ENCODE measurements at regions of chr16 and their contacts with region 1.

Region 1: DNA sequence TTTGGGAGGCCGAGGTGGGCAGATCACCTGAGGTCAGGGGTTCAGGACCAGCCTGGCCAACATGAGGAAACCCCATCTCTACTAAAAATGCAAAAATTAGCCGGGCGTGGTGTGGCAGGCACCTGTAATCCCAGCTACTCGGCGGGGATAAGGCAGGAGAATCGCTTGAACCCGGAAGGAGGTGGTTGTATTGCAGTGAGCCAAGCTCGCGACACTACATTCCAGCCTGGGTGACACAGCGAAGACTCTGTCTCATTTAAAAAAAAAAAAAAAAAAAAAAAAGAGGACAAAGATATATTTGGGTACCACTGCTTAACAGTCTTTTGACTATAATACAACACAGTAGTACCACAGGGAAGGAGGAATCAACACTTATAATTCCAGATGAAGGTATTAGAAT is 9.2 kb downstream of the CNOT1 start:
- DNase-seq: no peak
- ATAC-seq: no peak
- H3K4me3 ChIP-seq: no peak overlapping the region
- H3K4me3 Mint-ChIP-seq: no peak overlapping the region
- H3K27ac ChIP-seq: no peak overlapping the region
- H3K27ac Mint-ChIP-seq: peak overlapping the region; percentile 39
- H3K4me1 ChIP-seq: peaks cover 36% of the 10 kb centered on the region
- H3K4me1 Mint-ChIP-seq: peaks cover 24% of the 10 kb centered on the region
- H3K27me3 ChIP-seq: no peaks in the 10 kb centered on the region
- H3K27me3 Mint-ChIP-seq: no peaks in the 10 kb centered on the region
- CTCF ChIP-seq: no peak

Region 2: GRCh38 chr16:58533751-58534470 is 86.5 kb before region 1 on chr16:
- CTCF ChIA-PET with region 1: no interaction called
- POLR2A ChIA-PET with region 1: no interaction called
- intact Hi-C with region 1: loop called in 1 of 2 experiments (anchors 5 kb)
- DNase-seq: no peak
- ATAC-seq: no peak
- H3K4me3 ChIP-seq: no peak overlapping the region
- H3K4me3 Mint-ChIP-seq: no peak overlapping the region
- H3K27ac ChIP-seq: no peak overlapping the region
- H3K27ac Mint-ChIP-seq: no peak overlapping the region
- H3K4me1 ChIP-seq: no peaks in the 10 kb centered on the region
- H3K4me1 Mint-ChIP-seq: no peaks in the 10 kb centered on the region
- H3K27me3 ChIP-seq: no peaks in the 10 kb centered on the region
- H3K27me3 Mint-ChIP-seq: no peaks in the 10 kb centered on the region
- CTCF ChIP-seq: no peak

Region 3: GRCh38 chr16:58578642-58579041 is 41.8 kb before region 1 on chr16:
- CTCF ChIA-PET with region 1: no interaction called
- POLR2A ChIA-PET with region 1: no interaction called
- intact Hi-C with region 1: no loop called
- DNase-seq: no peak
- ATAC-seq: no peak
- H3K4me3 ChIP-seq: no peak overlapping the region
- H3K4me3 Mint-ChIP-seq: no peak overlapping the region
- H3K27ac ChIP-seq: no peak overlapping the region
- H3K27ac Mint-ChIP-seq: no peak overlapping the region
- H3K4me1 ChIP-seq: no peaks in the 10 kb centered on the region
- H3K4me1 Mint-ChIP-seq: no peaks in the 10 kb centered on the region
- H3K27me3 ChIP-seq: no peaks in the 10 kb centered on the region
- H3K27me3 Mint-ChIP-seq: no peaks in the 10 kb centered on the region
- CTCF ChIP-seq: no peak

Region 4: DNA sequence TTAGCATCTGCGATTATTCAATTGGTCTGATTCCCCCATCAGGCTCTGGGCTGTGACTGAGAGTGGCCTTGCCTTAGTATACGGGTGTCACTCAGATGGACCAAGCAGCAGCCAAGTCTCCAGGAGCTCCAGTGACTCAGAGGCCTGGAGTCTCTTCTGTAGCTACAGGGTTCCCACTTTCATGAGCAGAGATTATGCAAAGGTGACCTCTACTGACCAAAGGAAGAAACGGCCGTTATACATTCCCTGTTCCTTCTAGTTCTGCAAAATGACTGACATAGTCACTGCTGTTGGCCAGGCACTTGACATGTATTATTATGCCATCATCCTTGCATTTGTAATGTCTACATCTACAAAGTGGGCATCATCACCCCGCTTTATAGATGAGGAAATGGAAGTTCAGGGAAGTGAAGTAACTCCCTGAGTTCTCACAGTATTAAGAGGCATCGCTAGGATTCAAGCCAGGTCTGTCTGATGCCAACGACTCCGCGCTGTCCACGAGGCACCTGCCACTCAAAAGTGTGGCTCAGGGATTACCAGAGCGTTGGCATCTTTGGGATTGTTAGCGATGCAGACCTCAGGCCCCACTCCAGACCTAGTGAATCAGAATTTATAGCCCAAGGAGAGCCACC is 40.9 kb after region 1 on chr16:
- CTCF ChIA-PET with region 1: no interaction called
- POLR2A ChIA-PET with region 1: no interaction called
- intact Hi-C with region 1: no loop called
- DNase-seq: peak in 3 of 14 experiments; percentile 25 to 64 (median 52)
- ATAC-seq: no peak
- H3K4me3 ChIP-seq: no peak overlapping the region
- H3K4me3 Mint-ChIP-seq: no peak overlapping the region
- H3K27ac ChIP-seq: no peak overlapping the region
- H3K27ac Mint-ChIP-seq: no peak overlapping the region
- H3K4me1 ChIP-seq: no peaks in the 10 kb centered on the region
- H3K4me1 Mint-ChIP-seq: no peaks in the 10 kb centered on the region
- H3K27me3 ChIP-seq: no peaks in the 10 kb centered on the region
- H3K27me3 Mint-ChIP-seq: peaks cover 4% of the 10 kb centered on the region
- CTCF ChIP-seq: peak; percentile 15